Activated naive CD4-positive, alpha-beta T cell treated with anti-CD3 and anti-CD28 coated beads, Interleukin-2, amount 10 ng/mL, durations not matched to agents 7 days and 5 days (primary cell): ENCODE measurements at regions of chr3 and their contacts with region 1.

Region 1: DNA sequence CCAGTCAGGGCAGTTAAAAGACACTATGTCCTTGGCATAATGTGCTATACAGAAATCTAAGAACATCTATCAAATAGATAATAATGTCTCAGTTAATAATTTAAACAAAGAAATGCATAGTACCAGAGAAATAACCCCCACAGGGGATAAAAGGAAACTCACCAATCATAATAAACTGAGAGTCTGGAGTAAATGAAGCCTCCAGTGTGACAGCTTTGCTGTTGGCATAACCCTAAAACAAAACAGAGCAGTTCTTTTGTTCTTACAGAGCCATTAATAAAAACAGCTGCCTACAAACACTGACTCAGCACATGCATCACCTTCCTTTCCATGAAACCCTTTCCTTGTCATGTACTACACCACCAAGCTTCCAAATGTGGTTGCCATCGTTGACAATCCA is 13.5 kb downstream of the PPM1M start:
- DNase-seq: no peak
- H3K4me3 Mint-ChIP-seq: no peak overlapping the region
- H3K27ac Mint-ChIP-seq: no peak overlapping the region
- H3K4me1 Mint-ChIP-seq: peaks cover 98% of the 10 kb centered on the region
- H3K27me3 Mint-ChIP-seq: no peaks in the 10 kb centered on the region

Region 2: DNA sequence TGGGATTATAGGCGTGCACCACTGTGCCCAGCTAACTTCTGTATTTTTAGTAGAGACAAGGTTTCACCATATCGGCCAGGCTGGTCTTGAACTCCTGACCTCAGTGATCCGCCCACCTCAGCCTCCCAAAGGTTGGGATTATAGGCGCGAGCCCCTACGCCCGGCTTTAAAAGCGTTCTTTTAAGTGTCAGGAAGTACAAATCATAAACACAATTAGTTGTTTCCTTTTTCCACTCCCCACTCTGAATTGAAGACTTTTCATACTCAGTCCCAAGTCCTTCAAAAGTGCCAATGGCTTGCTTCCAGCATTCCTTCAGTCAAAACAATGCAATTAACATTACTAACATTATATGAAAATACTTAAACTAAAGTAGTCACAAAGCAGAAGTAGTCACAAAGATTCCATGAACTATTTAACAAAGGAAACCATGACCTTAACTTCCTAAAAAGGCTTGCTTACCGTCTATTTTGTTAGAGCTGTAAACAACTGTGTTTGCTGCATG is 11.3 kb after region 1 on chr3:
- CTCF ChIA-PET with region 1: interaction called, 15 read pairs
- DNase-seq: no peak
- H3K4me3 Mint-ChIP-seq: peak overlapping the region; percentile 70
- H3K27ac Mint-ChIP-seq: peak overlapping the region; percentile 98
- H3K4me1 Mint-ChIP-seq: peaks cover 92% of the 10 kb centered on the region
- H3K27me3 Mint-ChIP-seq: no peaks in the 10 kb centered on the region